ENCODE measurements at regions of chr1 and their contacts with region 1.

Region 1: GRCh38 chr1:205162301-205162700 is 40.5 kb upstream of the RBBP5 start:
- DNase-seq: no peak
- ATAC-seq: no peak
- H3K4me3 ChIP-seq: no peak overlapping the region
- H3K27ac ChIP-seq: no peak overlapping the region
- H3K4me1 ChIP-seq: peaks cover 4 to 16% of the 10 kb centered on the region in 2 experiments
- H3K27me3 ChIP-seq: no peaks in the 10 kb centered on the region
- CTCF ChIP-seq: no peak
- EP300 ChIP-seq: no peak
- POLR2A ChIP-seq: no peak
- RAD21 ChIP-seq: no peak

Region 2: GRCh38 chr1:205141236-205142101 is 20.8 kb before region 1 on chr1:
- CTCF ChIA-PET with region 1: no interaction called
- POLR2A ChIA-PET with region 1: interaction called, 17 read pairs
- in situ Hi-C with region 1: no loop called
- intact Hi-C with region 1: no loop called
- DNase-seq: peak; percentile 77 to 91 (median 79)
- ATAC-seq: peak; percentile 94
- H3K4me3 ChIP-seq: no peak overlapping the region
- H3K27ac ChIP-seq: no peak overlapping the region
- H3K4me1 ChIP-seq: peaks cover 3 to 7% of the 10 kb centered on the region in 2 experiments; a peak in 3 of 5 replicates
- H3K27me3 ChIP-seq: no peaks in the 10 kb centered on the region
- CTCF ChIP-seq: peak; percentile 87 to 92 (median 92)
- EP300 ChIP-seq: no peak
- POLR2A ChIP-seq: no peak
- RAD21 ChIP-seq: peak; percentile 65 to 83

Region 3: DNA sequence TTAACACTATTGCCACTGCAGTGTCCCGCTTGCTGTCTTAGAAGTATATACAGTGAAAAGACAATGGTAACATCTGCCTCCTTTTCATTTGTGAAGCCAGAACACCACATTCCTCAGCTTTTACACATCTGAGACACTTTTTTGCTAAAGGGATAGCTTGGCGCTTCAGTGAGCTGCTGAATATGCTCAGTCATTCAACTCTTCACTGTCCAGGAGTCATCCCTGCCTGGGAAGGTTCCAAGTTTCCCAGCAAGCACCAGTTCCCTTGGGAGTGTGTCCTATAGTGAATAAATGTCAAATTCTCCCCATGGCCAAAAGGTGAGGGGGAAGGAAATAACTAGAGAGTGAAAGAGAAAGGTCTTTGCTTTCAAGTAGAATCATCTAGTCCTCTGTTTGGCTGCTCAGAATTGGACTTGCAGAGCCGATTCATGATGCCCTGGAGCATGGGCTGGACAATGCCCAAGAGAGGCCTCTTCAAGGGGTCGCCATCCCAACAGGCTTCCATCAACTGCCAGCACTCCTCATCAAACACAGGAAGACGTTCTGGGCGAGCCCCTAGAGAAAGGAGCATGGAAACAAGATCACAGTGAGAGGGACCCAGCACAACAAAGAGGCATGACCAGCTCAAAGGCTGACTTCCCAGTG is 15.0 kb before region 1 on chr1:
- CTCF ChIA-PET with region 1: no interaction called
- POLR2A ChIA-PET with region 1: interaction called, 17 read pairs
- in situ Hi-C with region 1: no loop called
- intact Hi-C with region 1: no loop called
- DNase-seq: peak in 1 of 4 experiments; percentile 10
- ATAC-seq: no peak
- H3K4me3 ChIP-seq: no peak overlapping the region
- H3K27ac ChIP-seq: no peak overlapping the region
- H3K4me1 ChIP-seq: peaks cover 0 to 3% of the 10 kb centered on the region in 2 experiments; a peak in 2 of 5 replicates
- H3K27me3 ChIP-seq: no peaks in the 10 kb centered on the region
- CTCF ChIP-seq: no peak
- EP300 ChIP-seq: no peak
- POLR2A ChIP-seq: no peak
- RAD21 ChIP-seq: no peak

Region 4: GRCh38 chr1:205172729-205173366 is 10.5 kb after region 1 on chr1:
- CTCF ChIA-PET with region 1: no interaction called
- POLR2A ChIA-PET with region 1: interaction called, 17 read pairs
- in situ Hi-C with region 1: no loop called
- intact Hi-C with region 1: loop called (anchors 1 kb)
- DNase-seq: peak; percentile 42 to 70 (median 56)
- ATAC-seq: peak; percentile 65
- H3K4me3 ChIP-seq: no peak overlapping the region
- H3K27ac ChIP-seq: peak overlapping the region; percentile 67
- H3K4me1 ChIP-seq: peaks cover 23 to 53% of the 10 kb centered on the region in 2 experiments
- H3K27me3 ChIP-seq: no peaks in the 10 kb centered on the region
- CTCF ChIP-seq: no peak
- EP300 ChIP-seq: peak; percentile 61; the same call in 1 of the 2 replicates
- POLR2A ChIP-seq: no peak
- RAD21 ChIP-seq: no peak

Region 5: GRCh38 chr1:205211169-205211838 is 49.0 kb after region 1 on chr1 and contains the start of gene DSTYK:
- CTCF ChIA-PET with region 1: no interaction called
- POLR2A ChIA-PET with region 1: interaction called, 4 read pairs
- in situ Hi-C with region 1: no loop called
- intact Hi-C with region 1: loop called (anchors 5 kb)
- DNase-seq: peak; percentile 95 to 99 (median 96)
- ATAC-seq: peak; percentile 95
- H3K4me3 ChIP-seq: peak within 1 kb of the TSS; percentile 85
- H3K27ac ChIP-seq: peak within 1 kb of the TSS; percentile 66
- H3K4me1 ChIP-seq: peaks cover 16 to 44% of the 10 kb centered on the region in 2 experiments
- H3K27me3 ChIP-seq: no peaks in the 10 kb centered on the region
- CTCF ChIP-seq: no peak
- EP300 ChIP-seq: peak; percentile 84
- POLR2A ChIP-seq: peak; percentile 90
- RAD21 ChIP-seq: no peak; a peak in 1 of 4 replicates
- polyA plus RNA-seq, gene DSTYK: 4.6 to 5.0 TPM

Measured in K562 (cell line).